ENCODE measurements at regions of chr4 and their contacts with region 1.

Region 1: GRCh38 chr4:2852481-2852921 is 8.9 kb downstream of the ADD1 start:
- DNase-seq: peak; percentile 92
- H3K4me3 ChIP-seq: peak overlapping the region in 1 of 8 donors; percentile 34
- H3K27ac ChIP-seq: peak overlapping the region in 7 of 8 donors; percentile 27 to 83 (median 73)
- H3K4me1 ChIP-seq: peaks cover 66 to 100% (median 93%) of the 10 kb centered on the region in 6 donors
- H3K27me3 ChIP-seq: no peaks in the 10 kb centered on the region
- CTCF ChIP-seq: no peak
- POLR2A ChIP-seq: no peak

Region 2: DNA sequence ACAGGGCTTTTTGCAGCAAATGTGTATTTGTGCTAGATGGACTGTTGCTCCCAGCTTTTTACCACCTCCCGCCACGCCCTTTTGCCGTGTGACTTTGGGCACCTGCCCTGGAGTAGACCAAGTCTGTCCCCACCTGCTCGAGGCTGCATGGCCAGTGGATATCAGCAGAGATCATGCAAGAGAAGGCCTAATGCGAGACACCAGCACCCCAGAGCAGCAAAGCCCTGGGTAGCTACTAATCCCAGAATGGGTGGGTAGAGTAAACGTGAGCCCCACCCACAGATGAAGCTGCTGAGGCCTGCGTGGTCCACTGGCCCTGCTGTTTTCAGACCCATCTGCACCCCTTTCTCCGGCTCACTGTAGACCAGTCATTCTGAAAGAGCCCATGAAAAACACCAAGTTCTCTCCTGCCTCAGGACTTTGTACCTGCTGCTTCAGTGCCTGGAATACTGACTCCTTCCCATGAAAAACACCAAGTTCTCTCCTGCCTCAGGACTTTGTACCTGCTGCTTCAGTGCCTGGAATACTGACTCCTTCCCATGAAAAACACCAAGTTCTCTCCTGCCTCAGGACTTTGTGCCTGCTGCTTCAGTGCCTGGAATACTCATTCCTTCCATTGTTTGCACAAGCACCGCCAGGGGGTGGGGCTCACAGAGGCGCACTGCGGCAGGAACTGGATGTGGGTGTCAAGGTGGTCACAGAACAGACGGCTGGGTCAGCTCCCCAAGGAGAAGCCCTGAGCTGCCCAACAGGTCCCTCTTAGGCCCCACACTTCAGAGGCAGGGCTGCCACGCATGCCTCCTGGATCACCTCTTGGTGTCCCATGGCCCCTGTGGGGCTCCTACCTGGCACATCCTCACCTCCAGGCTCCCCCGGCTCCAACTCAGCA is 91.2 kb before region 1 on chr4:
- intact Hi-C with region 1: loop called (anchors 10 kb)
- DNase-seq: peak; percentile 81
- H3K4me3 ChIP-seq: no peak overlapping the region
- H3K27ac ChIP-seq: no peak overlapping the region
- H3K4me1 ChIP-seq: peaks cover 4 to 33% (median 23%) of the 10 kb centered on the region in 6 donors
- H3K27me3 ChIP-seq: no peaks in the 10 kb centered on the region
- CTCF ChIP-seq: peak in 2 of 11 experiments; percentile 6 to 16
- POLR2A ChIP-seq: no peak

Region 3: GRCh38 chr4:2923141-2923551 is 70.6 kb after region 1 on chr4:
- intact Hi-C with region 1: loop called (anchors 10 kb)
- DNase-seq: no peak
- H3K4me3 ChIP-seq: peak overlapping the region in 1 of 8 donors; percentile 15
- H3K27ac ChIP-seq: peak overlapping the region in 7 of 8 donors; percentile 2 to 80 (median 48)
- H3K4me1 ChIP-seq: peaks cover 15 to 50% (median 25%) of the 10 kb centered on the region in 6 donors
- H3K27me3 ChIP-seq: no peaks in the 10 kb centered on the region
- CTCF ChIP-seq: no peak
- POLR2A ChIP-seq: no peak

Region 4: DNA sequence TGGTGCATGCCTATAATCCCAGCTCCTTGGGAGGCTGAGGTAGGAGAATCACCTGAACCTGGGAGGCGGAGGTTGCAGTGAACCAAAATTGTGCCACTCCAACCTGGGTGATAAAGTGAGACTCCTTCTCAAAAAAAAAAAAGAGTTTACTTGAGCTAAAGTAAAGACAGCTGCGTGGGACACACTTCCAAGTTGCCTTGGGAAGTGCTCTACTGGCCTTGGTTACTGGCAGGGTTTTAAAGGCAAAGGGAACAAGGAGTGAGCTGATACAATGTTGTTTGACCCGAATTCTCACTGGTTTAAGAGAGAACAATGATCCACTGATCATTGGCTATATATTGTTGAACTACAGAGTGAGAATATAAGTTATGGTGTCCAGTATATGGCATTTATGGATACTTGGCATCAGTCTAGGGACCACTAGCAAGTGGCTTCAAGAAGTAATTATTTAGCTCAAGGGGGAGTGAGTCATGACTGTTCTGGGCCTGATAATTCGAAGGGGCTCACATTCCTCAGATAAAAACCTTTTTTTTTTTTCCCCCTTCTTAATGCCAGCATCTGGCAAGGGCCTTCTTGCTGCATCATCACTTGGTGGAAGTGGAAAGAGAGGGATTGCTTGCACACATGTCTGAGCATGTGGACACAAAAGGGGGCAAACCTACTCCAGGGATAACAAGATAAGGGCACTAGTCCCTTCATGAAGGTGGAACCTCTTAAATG is 143.2 kb after region 1 on chr4:
- intact Hi-C with region 1: no loop called
- DNase-seq: no peak
- H3K4me3 ChIP-seq: no peak overlapping the region
- H3K27ac ChIP-seq: no peak overlapping the region
- H3K4me1 ChIP-seq: no peaks in the 10 kb centered on the region
- H3K27me3 ChIP-seq: no peaks in the 10 kb centered on the region
- CTCF ChIP-seq: no peak
- POLR2A ChIP-seq: no peak

Region 5: GRCh38 chr4:3340700-3341083 is 488.2 kb after region 1 on chr4:
- intact Hi-C with region 1: no loop called
- DNase-seq: no peak
- H3K4me3 ChIP-seq: no peak overlapping the region
- H3K27ac ChIP-seq: no peak overlapping the region
- H3K4me1 ChIP-seq: peaks cover 0 to 16% (median 9%) of the 10 kb centered on the region in 6 donors
- H3K27me3 ChIP-seq: no peaks in the 10 kb centered on the region
- CTCF ChIP-seq: no peak
- POLR2A ChIP-seq: no peak